K562 (cell line): ENCODE measurements at regions of chr11 and their contacts with region 1.

Region 1: DNA sequence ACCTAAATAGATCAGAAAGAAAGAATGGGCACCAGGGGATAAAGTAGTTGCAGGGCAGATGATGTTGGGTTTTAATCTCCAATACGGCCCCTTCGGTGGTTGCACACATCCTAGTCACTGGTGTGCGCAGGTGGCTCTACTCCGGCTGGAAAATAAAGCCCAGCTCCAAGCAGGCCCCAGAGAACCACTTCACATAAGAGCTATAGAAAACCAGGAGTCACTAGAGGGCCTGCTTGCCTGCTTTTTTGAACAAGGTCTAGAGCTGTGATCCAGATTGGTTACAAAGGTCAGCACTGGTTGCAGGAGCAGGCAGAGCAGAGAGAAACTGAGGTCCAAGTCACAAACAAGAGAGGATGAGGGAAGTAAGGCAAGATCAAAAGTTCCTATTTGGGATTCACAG is 41.5 kb upstream of the MS4A8 start:
- DNase-seq: peak in 1 of 4 experiments; percentile 7
- ATAC-seq: peak; percentile 67; the same call in 2 of the 3 replicates
- H3K4me3 ChIP-seq: no peak overlapping the region
- H3K27ac ChIP-seq: no peak overlapping the region
- H3K4me1 ChIP-seq: no peaks in the 10 kb centered on the region
- H3K27me3 ChIP-seq: no peaks in the 10 kb centered on the region
- CTCF ChIP-seq: 0 out of 6 replicates have a peak, but pooled peaks of 1 of the 3 experiments have one; percentile 11
- EP300 ChIP-seq: no peak
- POLR2A ChIP-seq: no peak
- RAD21 ChIP-seq: no peak

Region 2: GRCh38 chr11:60756307-60757032 is 98.6 kb after region 1 on chr11 and contains the start of gene MS4A15:
- CTCF ChIA-PET with region 1: no interaction called
- POLR2A ChIA-PET with region 1: no interaction called
- in situ Hi-C with region 1: no loop called
- intact Hi-C with region 1: loop called (anchors 10 kb)
- DNase-seq: peak; percentile 54 to 66 (median 57)
- ATAC-seq: peak; percentile 86
- H3K4me3 ChIP-seq: no peak within 1 kb of the TSS
- H3K27ac ChIP-seq: no peak within 1 kb of the TSS
- H3K4me1 ChIP-seq: peaks cover 0 to 8% of the 10 kb centered on the region in 2 experiments; a peak in 2 of 5 replicates
- H3K27me3 ChIP-seq: peaks cover 28 to 37% of the 10 kb centered on the region in 2 experiments
- CTCF ChIP-seq: peak; percentile 62 to 65 (median 64)
- EP300 ChIP-seq: no peak
- POLR2A ChIP-seq: no peak
- RAD21 ChIP-seq: peak in 1 of 2 experiments; percentile 45; a peak in 2 of 4 replicates
- polyA plus RNA-seq, gene MS4A15: not detected